ENCODE measurements at regions of chr2 and their contacts with region 1.

Region 1: GRCh38 chr2:45778720-45779171 is 127.3 kb downstream of the PRKCE start:
- DNase-seq: peak; percentile 4
- H3K4me3 ChIP-seq: no peak overlapping the region
- H3K27ac ChIP-seq: no peak overlapping the region
- H3K4me1 ChIP-seq: peaks cover 0 to 27% (median 0%) of the 10 kb centered on the region in 3 donors
- H3K27me3 ChIP-seq: no peaks in the 10 kb centered on the region
- CTCF ChIP-seq: peak; percentile 53 to 84 (median 82)
- POLR2A ChIP-seq: no peak

Region 2: DNA sequence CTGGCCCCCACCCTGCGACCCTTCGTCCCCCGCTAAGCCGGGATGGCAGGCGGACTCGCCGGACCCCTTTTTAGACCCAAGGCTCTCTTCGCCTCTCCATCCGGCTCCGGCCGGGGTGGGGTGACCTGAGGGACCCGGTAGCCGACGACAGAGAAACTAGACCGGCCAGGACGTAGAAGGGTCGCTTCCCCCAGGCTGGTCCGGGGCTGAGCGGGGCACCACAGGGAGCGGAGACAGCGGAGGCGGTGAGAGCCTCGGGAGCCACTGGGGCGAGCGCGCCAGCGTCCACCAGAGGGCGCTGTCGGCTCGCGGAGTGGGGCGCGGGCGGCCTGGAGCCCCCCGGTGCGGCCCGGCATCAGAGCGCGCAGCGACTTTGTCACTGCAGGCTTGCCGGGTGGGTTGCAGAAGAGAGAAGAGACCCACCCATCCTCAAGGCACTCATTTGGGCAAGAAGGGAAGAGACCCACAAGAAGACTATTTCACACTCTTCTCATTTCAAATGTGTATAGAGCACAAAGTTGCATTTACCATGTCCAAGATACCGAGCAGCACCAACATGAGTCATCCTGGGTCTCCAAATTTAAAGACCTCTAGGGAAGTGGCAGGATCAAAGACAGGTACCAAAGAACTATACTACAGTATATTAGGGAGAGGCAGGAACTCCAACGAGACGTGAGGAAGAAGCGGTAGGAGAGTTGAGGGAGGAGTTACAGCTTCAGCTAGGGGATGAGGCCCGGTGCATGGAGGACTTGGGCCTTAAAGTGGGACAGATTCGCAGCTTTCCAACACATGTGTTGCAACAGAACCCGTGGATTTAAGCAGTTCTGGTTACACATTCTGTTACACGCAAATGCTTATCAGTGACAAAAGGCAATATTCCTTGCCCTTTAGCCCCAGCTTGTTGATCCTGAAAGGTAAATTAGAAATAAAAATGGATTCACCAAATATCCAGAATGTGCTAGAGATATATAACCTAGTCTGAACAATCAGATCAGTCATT is 134.9 kb before region 1 on chr2:
- intact Hi-C with region 1: loop called (anchors 2 kb)
- DNase-seq: no peak
- H3K4me3 ChIP-seq: peak overlapping the region; percentile 32 to 75 (median 54)
- H3K27ac ChIP-seq: peak overlapping the region in 1 of 4 donors; percentile 45
- H3K4me1 ChIP-seq: peaks cover 5 to 26% (median 10%) of the 10 kb centered on the region in 3 donors
- H3K27me3 ChIP-seq: peaks cover 0 to 18% (median 0%) of the 10 kb centered on the region in 4 donors
- CTCF ChIP-seq: peak; percentile 95 to 100 (median 99)
- POLR2A ChIP-seq: no peak

Region 3: DNA sequence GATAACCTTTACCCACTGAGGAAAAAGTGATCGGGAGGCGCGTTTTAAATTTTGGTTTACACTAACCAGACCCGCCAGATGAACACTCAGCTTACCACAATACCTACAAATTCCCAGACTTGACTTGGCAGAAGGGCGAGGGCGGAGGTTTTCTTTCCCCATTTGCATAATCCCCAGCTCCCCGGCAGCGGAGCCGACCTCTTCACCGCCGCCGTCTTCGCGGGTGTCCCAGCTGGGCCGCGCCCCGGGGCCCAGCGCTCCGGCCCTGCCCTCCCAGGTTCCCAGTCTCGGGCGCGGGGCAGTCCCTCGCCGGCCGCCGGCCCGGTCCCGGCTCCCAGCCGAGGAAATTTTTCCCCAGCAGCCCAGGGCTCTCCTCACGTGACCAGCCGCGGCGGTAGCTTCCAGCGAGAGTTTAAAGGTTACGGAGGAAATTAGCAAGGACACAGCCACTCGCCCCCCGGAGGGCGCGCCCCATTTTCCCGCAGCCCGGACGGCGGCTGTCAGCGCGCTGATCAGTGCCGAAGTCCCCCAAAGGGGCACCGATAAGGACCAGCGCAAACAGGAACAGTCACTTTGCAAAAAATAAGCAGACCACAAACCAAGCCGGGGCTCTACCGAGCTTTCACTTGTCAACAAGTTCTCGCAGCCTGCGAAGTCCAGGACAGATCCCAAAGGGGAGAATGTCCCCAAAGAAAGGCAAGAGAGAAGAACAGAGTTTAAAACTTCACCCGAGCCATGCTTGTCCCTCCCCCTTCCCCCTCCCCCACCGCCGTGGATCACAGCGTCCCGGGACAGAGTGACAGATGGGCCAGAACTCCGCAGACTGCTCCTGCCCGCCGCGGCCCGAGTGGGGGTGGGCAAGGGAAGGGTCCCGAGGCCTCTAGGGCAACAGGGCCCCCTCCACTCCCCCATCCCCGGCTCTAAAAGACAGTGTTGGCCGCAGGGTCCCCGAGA is 128.6 kb before region 1 on chr2:
- intact Hi-C with region 1: loop called (anchors 2 kb)
- DNase-seq: peak; percentile 24
- H3K4me3 ChIP-seq: peak overlapping the region; percentile 68 to 100 (median 89)
- H3K27ac ChIP-seq: peak overlapping the region; percentile 93 to 100 (median 99)
- H3K4me1 ChIP-seq: peaks cover 12 to 55% (median 21%) of the 10 kb centered on the region in 3 donors
- H3K27me3 ChIP-seq: no peaks in the 10 kb centered on the region
- CTCF ChIP-seq: peak in 1 of 6 experiments; percentile 12
- POLR2A ChIP-seq: peak in 2 of 4 donors; percentile 35 to 48

Region 4: DNA sequence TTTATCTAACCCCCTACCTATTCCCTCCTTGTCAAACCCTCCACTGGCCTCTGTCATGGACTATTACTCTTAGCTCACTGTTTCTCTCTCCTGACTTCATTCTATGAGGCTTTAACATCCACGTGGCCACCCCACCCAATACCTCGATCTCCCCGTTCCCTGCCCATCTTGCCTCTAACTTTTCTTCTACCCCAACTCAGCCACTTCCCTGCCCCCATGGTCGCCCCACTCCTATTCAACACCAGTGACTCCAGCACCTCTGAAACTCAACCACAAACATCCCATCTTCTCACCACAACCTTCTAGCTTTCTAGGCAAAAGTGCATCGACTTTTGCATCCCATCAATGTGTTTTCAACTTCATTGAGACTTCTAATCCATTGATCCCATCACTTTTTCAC is 424.2 kb after region 1 on chr2:
- intact Hi-C with region 1: no loop called
- DNase-seq: no peak
- H3K4me3 ChIP-seq: no peak overlapping the region
- H3K27ac ChIP-seq: no peak overlapping the region
- H3K4me1 ChIP-seq: peaks cover 0 to 24% (median 7%) of the 10 kb centered on the region in 3 donors
- H3K27me3 ChIP-seq: no peaks in the 10 kb centered on the region
- CTCF ChIP-seq: no peak
- POLR2A ChIP-seq: no peak

Measured in esophagus squamous epithelium (tissue), 5 donors.